ENCODE measurements at regions of chr17 and their contacts with region 1.

Region 1: GRCh38 chr17:47009759-47010594 is 30.9 kb upstream of the RPRML start:
- ATAC-seq: no peak
- H3K4me3 ChIP-seq: no peak overlapping the region
- H3K27ac ChIP-seq: no peak overlapping the region
- H3K4me1 ChIP-seq: no peaks in the 10 kb centered on the region

Region 2: GRCh38 chr17:46940621-46941404 is 69.2 kb before region 1 on chr17:
- in situ Hi-C with region 1: loop called in 1 of 9 experiments (anchors 10 kb)
- ATAC-seq: peak; percentile 45 to 93 (median 84)
- H3K4me3 ChIP-seq: no peak overlapping the region
- H3K27ac ChIP-seq: no peak overlapping the region
- H3K4me1 ChIP-seq: peaks cover 5 to 20% of the 10 kb centered on the region in 2 donors

Measured in motor neuron (in vitro differentiated cells).